OCI-LY7 (cell line): ENCODE measurements at regions of chr3 and their contacts with region 1.

Region 1: DNA sequence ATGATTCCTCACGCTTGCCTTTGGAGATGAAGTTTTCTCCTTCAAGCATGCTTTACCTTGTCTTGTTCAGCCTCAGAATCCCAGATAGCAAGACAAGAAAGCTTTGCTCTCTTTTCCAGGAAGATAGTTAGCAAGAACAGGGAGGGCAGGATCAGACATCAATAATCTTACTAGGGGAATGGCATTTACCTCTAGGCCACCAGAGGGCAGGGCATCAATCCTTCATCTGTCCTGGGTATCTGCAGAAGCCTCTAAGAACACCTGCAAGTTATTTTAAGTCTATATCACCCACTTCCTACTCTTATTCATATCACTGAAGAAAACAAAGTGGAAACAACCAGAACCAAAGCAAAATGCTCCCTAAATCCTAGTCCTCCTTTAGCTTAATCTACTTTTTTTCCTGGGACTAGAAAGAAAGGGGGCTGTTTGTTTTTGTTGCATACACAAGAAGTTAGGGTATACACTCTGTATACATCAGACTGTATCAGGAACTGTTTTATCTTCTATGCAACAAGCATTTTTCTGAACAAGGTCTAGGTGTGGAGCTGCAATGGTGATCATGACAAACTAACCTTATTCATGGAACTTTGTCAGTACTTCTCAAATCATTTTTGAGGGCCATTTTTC is 862.5 kb downstream of the CADM2 start:
- DNase-seq: peak; percentile 49
- H3K4me3 ChIP-seq: no peak overlapping the region
- H3K27ac ChIP-seq: no peak overlapping the region
- H3K4me1 ChIP-seq: peaks cover 4% of the 10 kb centered on the region
- CTCF ChIP-seq: peak; percentile 83

Region 2: GRCh38 chr3:85670634-85671033 is 150.6 kb before region 1 on chr3:
- CTCF ChIA-PET with region 1: no interaction called
- POLR2A ChIA-PET with region 1: no interaction called
- intact Hi-C with region 1: no loop called
- DNase-seq: no peak
- H3K4me3 ChIP-seq: no peak overlapping the region
- H3K27ac ChIP-seq: no peak overlapping the region
- H3K4me1 ChIP-seq: no peaks in the 10 kb centered on the region
- CTCF ChIP-seq: no peak

Region 3: DNA sequence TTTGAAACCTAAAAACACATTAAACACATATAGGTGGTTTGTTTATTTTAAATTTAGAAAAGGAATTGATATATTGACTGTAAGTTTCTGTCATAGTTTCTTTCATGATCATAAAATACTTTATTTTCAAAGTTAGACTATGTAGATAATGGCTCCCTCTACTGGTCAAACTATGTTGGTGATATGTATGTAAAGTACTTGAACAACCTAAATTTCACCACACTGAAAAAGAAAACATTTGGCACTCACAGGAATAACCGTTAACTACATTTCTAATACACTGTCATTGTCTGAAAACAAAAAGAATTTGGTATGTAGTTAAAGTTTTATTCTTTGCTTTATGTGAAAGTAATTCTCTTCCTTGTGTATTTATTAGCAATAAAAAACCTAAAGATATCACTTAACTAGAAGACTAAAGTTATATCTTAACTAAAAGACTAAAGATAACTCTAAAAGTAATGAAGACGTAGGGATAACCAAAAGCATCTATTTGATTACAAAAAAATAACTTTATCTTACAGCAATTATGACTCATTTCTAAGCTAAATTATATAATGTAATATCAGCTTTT is 742.2 kb after region 1 on chr3:
- CTCF ChIA-PET with region 1: no interaction called
- POLR2A ChIA-PET with region 1: no interaction called
- intact Hi-C with region 1: loop called (anchors 10 kb)
- DNase-seq: peak; percentile 59
- H3K4me3 ChIP-seq: no peak overlapping the region
- H3K27ac ChIP-seq: no peak overlapping the region
- H3K4me1 ChIP-seq: no peaks in the 10 kb centered on the region
- CTCF ChIP-seq: peak; percentile 90